ENCODE measurements at regions of chr21 and their contacts with region 1.

Region 1: GRCh38 chr21:28805885-28806284 is 186.8 kb downstream of the LTN1 start:
- DNase-seq: peak; percentile 21 to 85
- H3K4me3 ChIP-seq: no peak overlapping the region
- H3K27ac ChIP-seq: peak overlapping the region; percentile 84 to 86
- H3K4me1 ChIP-seq: peaks cover 14 to 38% of the 10 kb centered on the region in 2 donors
- H3K27me3 ChIP-seq: no peaks in the 10 kb centered on the region
- CTCF ChIP-seq: no peak

Region 2: DNA sequence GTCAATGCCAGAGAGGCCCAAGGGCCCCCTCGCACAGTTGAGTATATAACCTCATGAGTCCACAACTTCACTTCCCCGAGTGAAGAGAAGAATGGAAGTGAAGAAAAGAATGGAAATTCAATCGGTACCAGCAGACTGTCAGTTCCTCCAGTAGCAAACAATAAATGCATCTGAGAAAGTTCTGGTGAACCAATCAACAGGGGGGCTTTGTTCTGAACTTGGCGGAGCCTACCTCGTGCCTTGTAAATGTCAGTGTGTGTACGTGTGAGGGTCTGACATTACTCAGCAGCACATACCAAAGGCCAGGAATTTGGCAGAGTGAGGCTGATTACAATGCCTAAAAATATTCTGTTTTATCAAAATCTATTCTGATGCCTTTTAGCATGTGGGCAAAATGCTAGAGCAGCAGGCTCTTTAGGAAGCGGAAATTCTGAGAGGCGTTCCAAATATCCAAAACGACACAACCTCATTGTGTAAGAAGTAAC is 51.7 kb before region 1 on chr21:
- intact Hi-C with region 1: loop called (anchors 5 kb)
- DNase-seq: peak in 1 of 2 donors; percentile 88
- H3K4me3 ChIP-seq: peak overlapping the region in 1 of 2 donors; percentile 11
- H3K27ac ChIP-seq: peak overlapping the region; percentile 86 to 96
- H3K4me1 ChIP-seq: peaks cover 4 to 38% of the 10 kb centered on the region in 2 donors
- H3K27me3 ChIP-seq: no peaks in the 10 kb centered on the region
- CTCF ChIP-seq: no peak

Region 3: DNA sequence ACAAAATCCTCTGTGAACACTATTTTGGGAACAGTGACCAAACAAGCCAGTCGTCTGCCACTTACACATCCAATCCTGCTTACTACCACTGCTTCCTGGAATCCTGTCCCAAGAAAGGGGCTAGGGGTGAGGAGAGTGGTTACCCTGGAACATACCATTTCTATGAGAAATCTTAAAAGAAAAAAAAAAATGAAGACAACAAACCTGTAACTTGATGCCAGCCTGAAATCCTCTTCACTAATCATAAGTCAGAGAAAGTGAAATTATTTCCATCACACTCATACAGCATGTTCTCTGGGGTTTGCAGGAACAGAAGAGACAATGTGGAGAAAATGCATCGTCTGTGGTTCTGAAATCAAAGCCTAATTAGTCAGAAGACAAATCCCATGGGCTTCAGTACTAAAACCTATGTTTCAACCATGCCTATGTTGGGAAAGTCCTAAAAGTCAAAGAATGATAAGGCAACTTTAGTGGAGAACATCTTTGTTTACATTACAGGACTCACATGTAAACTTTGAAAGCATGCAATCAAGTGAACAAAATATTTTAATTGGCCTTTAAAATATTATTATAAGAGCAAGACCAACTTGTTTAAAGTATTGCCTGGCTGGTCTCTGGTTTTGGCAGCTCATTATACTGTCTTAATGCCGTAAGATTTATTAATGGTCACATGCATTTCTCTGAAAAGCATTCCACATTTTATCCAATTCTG is 33.9 kb before region 1 on chr21:
- intact Hi-C with region 1: loop called (anchors 2 kb)
- DNase-seq: peak in 1 of 2 donors; percentile 85
- H3K4me3 ChIP-seq: peak overlapping the region in 1 of 2 donors; percentile 9
- H3K27ac ChIP-seq: peak overlapping the region; percentile 86 to 91
- H3K4me1 ChIP-seq: peaks cover 18 to 57% of the 10 kb centered on the region in 2 donors
- H3K27me3 ChIP-seq: no peaks in the 10 kb centered on the region
- CTCF ChIP-seq: no peak

Region 4: GRCh38 chr21:28822486-28823335 is 16.8 kb after region 1 on chr21:
- intact Hi-C with region 1: loop called (anchors 2 kb)
- DNase-seq: no peak
- H3K4me3 ChIP-seq: no peak overlapping the region
- H3K27ac ChIP-seq: peak overlapping the region; percentile 62 to 78
- H3K4me1 ChIP-seq: peaks cover 6 to 40% of the 10 kb centered on the region in 2 donors
- H3K27me3 ChIP-seq: no peaks in the 10 kb centered on the region
- CTCF ChIP-seq: no peak

Region 5: DNA sequence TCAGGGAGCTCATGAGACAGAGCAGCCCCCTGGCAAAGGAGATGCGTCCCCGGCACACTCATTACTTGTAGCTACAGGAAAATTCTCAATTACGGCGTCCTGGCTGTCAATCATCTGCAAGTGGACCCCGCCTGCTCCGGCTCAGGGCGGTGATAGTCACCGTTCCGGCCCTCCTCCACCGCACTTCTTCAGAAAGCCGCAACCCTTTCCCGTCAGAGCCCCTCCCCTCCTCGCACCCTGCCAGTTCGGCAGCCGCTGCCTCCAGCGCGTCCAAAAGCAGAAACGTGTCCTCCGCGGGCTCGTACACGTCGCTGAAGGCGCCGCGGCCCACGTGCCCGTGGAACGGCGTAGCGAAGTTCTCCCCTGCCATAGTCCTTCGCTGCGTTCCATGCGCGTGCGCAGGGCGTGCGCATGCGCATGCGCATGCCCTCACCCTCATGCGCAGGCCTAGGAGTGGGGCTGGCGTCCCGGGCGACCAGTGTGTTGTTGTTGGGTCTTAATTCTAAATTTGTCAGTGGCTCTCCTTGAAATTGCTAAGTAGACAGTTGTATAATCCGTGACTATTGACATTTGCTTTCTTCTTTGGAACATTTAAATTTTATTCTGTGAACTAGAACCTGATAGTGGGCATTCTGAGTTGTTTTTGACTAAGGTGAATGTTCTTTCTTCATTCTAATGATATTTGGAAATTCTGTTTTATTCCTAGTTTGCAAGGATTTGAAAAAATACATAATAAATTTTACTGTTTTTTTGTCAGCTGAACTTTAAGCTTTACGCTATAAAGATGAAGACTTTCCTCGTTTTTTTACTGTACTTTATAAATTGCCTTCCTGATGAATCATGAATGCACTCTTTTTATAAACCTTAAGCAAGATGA is 79.3 kb after region 1 on chr21:
- intact Hi-C with region 1: loop called (anchors 5 kb)
- DNase-seq: peak; percentile 69 to 95
- H3K4me3 ChIP-seq: peak overlapping the region; percentile 55 to 62
- H3K27ac ChIP-seq: peak overlapping the region; percentile 84 to 85
- H3K4me1 ChIP-seq: peaks cover 0 to 11% of the 10 kb centered on the region in 2 donors
- H3K27me3 ChIP-seq: no peaks in the 10 kb centered on the region
- CTCF ChIP-seq: no peak

Region 6: DNA sequence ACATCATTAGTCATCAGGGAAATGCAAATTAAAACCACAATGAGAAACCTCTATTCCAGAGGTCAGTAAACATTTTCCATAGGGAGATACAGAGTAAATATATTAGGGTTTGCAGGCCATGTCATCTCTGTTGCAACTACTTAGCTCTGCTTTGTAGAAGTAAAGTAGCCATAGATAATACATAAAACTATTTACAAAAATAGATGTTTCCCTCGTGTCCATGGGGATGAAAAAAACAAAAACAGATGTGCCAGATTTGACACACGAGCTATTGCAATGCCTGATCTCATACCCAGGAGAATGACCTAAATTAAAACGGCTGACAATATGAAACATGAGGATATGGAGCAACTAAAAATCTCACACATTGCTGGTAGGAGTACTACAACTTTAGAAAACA is 169.5 kb after region 1 on chr21:
- intact Hi-C with region 1: no loop called
- DNase-seq: no peak
- H3K4me3 ChIP-seq: no peak overlapping the region
- H3K27ac ChIP-seq: no peak overlapping the region
- H3K4me1 ChIP-seq: no peaks in the 10 kb centered on the region
- H3K27me3 ChIP-seq: no peaks in the 10 kb centered on the region
- CTCF ChIP-seq: no peak

Region 7: GRCh38 chr21:29056005-29056404 is 250.1 kb after region 1 on chr21:
- intact Hi-C with region 1: no loop called
- DNase-seq: no peak
- H3K4me3 ChIP-seq: no peak overlapping the region
- H3K27ac ChIP-seq: no peak overlapping the region
- H3K4me1 ChIP-seq: no peaks in the 10 kb centered on the region
- H3K27me3 ChIP-seq: no peaks in the 10 kb centered on the region
- CTCF ChIP-seq: no peak